Right cardiac atrium (tissue), 5 donors: ENCODE measurements at regions of chr12 and their contacts with region 1.

Region 1: GRCh38 chr12:120710031-120710804 is at the start of gene UNC119B:
- DNase-seq: peak; percentile 82 to 93 (median 90)
- ATAC-seq: peak; percentile 94
- H3K4me3 ChIP-seq: peak within 1 kb of the TSS; percentile 92
- H3K27ac ChIP-seq: peak within 1 kb of the TSS; percentile 86
- H3K4me1 ChIP-seq: peaks cover 11% of the 10 kb centered on the region
- H3K27me3 ChIP-seq: no peaks in the 10 kb centered on the region
- total RNA-seq, gene UNC119B: 15.7 to 17.8 (median 16.7) TPM

Region 2: DNA sequence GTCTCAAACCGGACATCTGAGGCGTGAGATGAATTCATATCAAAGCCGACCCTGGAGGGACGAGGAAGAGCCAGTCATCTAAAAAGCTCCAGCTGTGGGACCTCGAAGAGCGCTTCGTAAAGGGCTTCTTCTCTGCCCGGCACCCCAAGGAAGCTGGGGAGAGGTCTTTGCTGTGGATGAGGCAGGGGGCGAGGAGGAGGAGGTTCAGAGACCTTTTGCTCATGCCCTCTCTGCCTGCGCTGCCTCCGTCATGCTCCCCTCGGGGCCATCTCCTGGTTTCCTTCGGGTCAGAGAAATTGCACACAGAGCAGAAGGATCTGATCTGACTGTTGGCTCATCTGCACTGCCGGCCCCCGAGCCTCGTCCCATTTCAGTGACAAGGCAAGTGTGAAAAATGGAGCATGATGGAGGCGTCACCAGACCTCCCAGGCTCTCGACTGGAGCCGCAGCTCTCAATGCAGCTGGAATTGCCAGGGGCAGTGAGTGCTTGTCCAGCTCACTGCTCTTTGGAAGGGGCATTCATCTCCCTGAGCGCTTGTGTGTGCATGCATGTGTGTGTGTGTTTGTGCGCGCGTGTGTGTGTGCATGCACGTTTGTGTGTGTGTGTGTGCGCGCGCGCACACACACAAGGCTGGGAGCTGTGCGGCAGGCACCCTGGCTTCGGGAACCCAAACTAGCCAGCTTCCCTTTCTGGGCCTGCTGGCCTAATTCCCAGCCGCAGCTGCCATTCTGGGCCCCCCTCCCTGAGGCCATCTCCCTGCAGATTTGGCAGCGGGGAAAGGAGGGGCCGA is 60.6 kb before region 1 on chr12:
- intact Hi-C with region 1: loop called (anchors 2 to 5 kb)
- DNase-seq: peak in 2 of 3 donors; percentile 81 to 84
- ATAC-seq: peak in 1 of 2 donors; percentile 3
- H3K4me3 ChIP-seq: peak overlapping the region; percentile 59
- H3K27ac ChIP-seq: no peak overlapping the region
- H3K4me1 ChIP-seq: peaks cover 14% of the 10 kb centered on the region
- H3K27me3 ChIP-seq: no peaks in the 10 kb centered on the region

Region 3: DNA sequence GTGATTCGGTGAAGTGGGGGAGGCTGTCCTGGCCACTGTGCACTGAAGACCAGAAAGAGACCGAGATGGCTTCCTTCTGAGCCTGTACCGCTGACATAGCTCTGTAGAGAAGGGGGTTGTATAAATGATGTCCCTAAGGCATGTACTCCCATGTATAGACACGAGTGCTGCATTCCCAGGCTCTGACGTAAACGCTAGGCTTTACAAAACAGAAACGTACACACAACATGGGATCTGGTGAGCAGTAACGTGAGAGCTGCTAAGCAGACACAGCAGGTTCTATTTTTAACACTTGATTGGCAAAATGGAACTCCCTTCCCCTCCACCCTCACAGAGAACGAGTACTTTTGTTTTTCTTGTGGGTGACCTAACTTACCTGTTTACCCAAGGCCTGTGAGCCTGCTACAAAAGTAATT is 51.3 kb after region 1 on chr12:
- intact Hi-C with region 1: no loop called
- DNase-seq: no peak
- ATAC-seq: peak; percentile 52 to 66
- H3K4me3 ChIP-seq: no peak overlapping the region
- H3K27ac ChIP-seq: peak overlapping the region; percentile 86
- H3K4me1 ChIP-seq: peaks cover 4% of the 10 kb centered on the region
- H3K27me3 ChIP-seq: no peaks in the 10 kb centered on the region